ENCODE measurements at regions of chr2 and their contacts with region 1.

Region 1: GRCh38 chr2:190843874-190844699 is 36.5 kb upstream of the GLS start:
- DNase-seq: peak; percentile 17
- H3K4me3 Mint-ChIP-seq: no peak overlapping the region
- H3K27ac Mint-ChIP-seq: peak overlapping the region; percentile 94
- H3K4me1 Mint-ChIP-seq: peaks cover 44% of the 10 kb centered on the region
- H3K27me3 Mint-ChIP-seq: no peaks in the 10 kb centered on the region

Region 2: DNA sequence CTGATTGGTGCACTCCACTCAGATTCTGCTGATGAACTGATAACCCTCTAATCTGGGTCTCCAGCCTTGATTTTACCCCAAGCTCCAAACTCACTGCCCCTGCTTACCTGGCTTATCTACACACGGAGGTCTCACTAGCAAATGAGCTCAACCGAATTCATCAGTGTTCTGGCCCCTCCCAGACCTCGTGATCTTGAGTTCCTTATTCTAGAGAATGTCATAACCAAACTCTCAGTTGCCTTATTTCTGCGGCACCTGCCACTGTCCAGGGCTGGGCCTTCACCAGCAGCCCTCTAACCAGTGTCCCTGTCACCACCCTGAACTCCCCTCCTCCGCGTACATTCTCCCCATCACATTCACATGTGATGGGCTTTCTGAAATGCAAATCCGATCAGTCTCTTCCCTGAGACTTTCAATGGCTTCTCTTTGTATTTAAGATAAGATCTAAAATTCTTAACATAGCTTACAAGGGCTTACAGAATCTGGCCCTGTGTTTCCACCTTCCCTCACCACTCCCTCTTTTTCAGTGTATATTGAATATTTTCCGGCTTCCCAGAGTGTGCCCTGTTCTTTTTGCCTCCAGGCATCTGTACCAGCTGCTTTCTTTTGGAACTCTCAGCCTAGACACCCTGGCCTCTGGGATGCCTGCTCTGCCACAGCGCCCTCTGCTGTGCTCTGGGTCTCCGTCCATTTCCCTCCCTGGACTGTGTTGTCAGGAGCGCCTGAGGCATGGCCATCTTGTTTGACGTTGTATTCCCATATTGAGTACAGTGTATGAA is 164.1 kb before region 1 on chr2:
- intact Hi-C with region 1: loop called (anchors 1 kb)
- DNase-seq: peak; percentile 29
- H3K4me3 Mint-ChIP-seq: peak overlapping the region; percentile 51
- H3K27ac Mint-ChIP-seq: peak overlapping the region; percentile 92
- H3K4me1 Mint-ChIP-seq: peaks cover 45% of the 10 kb centered on the region
- H3K27me3 Mint-ChIP-seq: no peaks in the 10 kb centered on the region

Region 3: DNA sequence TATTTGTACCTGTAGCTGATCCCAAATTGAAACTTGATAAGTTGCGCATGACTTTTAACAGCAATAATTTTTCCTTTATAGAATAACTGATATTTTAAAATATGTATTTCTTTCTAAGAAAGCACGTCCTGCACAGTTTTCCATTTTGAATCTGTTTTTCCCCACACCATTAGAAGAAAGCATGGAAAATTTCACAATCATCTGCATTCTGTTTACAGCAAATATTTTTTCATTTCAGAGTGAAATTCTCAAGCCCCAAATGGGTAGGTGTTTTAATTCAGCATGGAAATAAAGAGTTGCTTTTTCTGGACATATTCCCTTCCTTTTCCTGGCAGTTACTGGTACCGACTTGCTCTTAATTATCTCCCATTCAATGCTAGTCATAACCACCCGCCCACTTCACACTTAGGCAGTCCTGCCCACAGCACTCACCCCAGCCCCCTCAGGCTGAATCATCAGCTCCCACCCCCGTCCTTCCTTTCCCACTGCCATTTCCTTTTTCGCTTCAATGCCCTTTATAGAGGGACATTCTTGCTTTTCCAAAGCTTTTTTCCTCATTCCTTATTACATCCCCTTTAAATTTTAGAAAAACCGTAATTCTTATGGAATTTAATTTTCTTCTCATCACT is 52.6 kb before region 1 on chr2:
- intact Hi-C with region 1: loop called (anchors 2 kb)
- DNase-seq: no peak
- H3K4me3 Mint-ChIP-seq: peak overlapping the region; percentile 15
- H3K27ac Mint-ChIP-seq: peak overlapping the region; percentile 75
- H3K4me1 Mint-ChIP-seq: peaks cover 65% of the 10 kb centered on the region
- H3K27me3 Mint-ChIP-seq: no peaks in the 10 kb centered on the region

Region 4: DNA sequence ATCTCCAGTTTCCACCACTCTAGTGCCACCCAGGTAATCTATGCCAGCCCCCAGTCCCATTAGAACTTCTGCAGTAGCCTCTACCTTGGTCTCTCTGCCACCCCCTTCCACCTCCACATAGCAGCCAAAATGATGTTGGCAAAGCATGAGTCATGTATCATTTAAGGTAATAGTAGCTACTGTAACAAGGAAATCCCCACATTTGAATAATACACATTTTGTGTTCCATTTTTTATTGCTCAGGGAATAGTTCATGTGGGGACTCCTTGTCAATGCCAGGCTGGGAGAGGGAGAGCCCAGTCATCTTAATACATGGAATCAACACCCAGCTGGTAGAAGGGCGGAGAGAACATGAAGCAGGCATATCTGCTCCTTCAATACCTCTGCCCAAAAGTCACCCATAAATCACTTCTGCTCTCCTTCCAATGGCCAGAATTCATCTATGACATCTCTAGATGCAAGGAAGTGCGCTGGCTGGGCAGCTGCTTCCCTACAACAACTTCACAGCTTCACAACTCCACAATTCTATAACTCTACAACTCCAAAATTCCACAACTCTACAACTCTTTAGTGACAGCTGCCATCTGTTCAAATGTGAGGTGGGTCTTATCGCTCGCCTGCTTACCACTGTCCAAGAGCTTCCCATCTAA is 34.1 kb before region 1 on chr2:
- intact Hi-C with region 1: loop called (anchors 2 kb)
- DNase-seq: no peak
- H3K4me3 Mint-ChIP-seq: no peak overlapping the region
- H3K27ac Mint-ChIP-seq: no peak overlapping the region
- H3K4me1 Mint-ChIP-seq: peaks cover 26% of the 10 kb centered on the region
- H3K27me3 Mint-ChIP-seq: no peaks in the 10 kb centered on the region

Region 5: GRCh38 chr2:190875891-190876290 is 31.8 kb after region 1 on chr2:
- intact Hi-C with region 1: no loop called
- DNase-seq: no peak
- H3K4me3 Mint-ChIP-seq: no peak overlapping the region
- H3K27ac Mint-ChIP-seq: peak overlapping the region; percentile 45
- H3K4me1 Mint-ChIP-seq: peaks cover 17% of the 10 kb centered on the region
- H3K27me3 Mint-ChIP-seq: peaks cover 2% of the 10 kb centered on the region

Region 6: GRCh38 chr2:190911813-190912212 is 67.7 kb after region 1 on chr2:
- intact Hi-C with region 1: loop called (anchors 2 kb)
- DNase-seq: no peak
- H3K4me3 Mint-ChIP-seq: no peak overlapping the region
- H3K27ac Mint-ChIP-seq: peak overlapping the region; percentile 53
- H3K4me1 Mint-ChIP-seq: peaks cover 42% of the 10 kb centered on the region
- H3K27me3 Mint-ChIP-seq: no peaks in the 10 kb centered on the region

Region 7: DNA sequence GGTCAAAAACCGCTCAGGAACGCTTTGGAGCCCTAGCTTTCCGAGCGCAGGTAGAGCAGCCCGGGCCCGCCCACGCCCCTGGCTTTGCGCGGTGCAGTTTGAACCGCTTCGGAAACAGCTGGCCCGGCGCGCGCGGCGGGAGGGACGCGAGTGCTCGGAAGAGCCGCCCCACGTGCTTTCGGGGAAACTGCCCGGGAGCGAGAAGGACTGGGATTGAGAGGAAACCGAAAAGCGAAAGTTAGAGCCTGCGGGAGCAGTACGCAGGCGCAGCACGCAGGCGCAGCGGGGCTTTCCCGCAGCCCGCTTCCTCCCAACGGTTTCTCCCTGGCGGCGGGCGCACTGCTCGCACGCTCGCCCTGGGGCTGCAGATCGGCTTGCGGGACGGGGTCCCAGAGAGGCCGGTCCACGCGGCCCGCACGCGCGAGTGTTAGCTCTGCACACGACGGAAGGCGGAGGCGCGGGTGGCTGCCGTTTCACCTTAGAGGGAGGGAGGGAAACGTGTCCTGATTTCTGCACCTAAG is 176.2 kb after region 1 on chr2:
- intact Hi-C with region 1: loop called (anchors 5 kb)
- DNase-seq: peak; percentile 96
- H3K4me3 Mint-ChIP-seq: no peak overlapping the region
- H3K27ac Mint-ChIP-seq: no peak overlapping the region
- H3K4me1 Mint-ChIP-seq: peaks cover 35% of the 10 kb centered on the region
- H3K27me3 Mint-ChIP-seq: no peaks in the 10 kb centered on the region

Region 8: DNA sequence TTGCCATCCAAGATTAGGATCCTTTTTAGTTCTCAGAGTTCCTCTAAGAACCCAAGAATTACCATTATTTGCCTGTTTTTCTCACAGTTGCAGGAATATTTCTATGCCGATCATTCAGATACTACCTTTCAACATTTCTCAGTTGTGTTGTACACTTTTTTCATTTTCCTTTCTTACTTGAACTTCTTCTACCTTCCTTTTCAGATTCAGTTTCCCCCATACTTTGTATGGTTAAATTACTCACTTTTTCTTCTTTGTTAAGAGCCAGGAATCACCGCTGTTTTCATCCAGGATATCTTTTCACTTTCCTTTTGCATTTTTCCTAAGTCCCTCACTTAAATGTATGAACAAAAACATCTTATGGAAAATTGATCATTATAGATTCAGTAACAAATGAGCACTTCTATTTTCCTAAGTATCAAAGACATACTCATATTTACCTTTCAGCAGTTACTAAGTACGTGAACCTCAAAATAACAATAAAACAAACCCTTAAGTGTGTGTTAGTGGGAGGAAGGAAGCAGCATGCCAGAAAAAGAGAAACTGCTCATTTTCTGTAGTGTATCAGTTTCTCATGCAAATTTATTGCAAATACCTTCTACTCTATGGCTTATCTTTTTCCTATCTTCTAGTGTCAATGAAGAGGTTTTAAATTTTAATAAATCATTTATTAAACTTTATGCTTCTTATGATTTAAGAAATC is 234.2 kb after region 1 on chr2:
- intact Hi-C with region 1: no loop called
- DNase-seq: no peak
- H3K4me3 Mint-ChIP-seq: peak overlapping the region; percentile 74
- H3K27ac Mint-ChIP-seq: peak overlapping the region; percentile 85
- H3K4me1 Mint-ChIP-seq: peaks cover 42% of the 10 kb centered on the region
- H3K27me3 Mint-ChIP-seq: no peaks in the 10 kb centered on the region

Measured in activated T-helper 2 cell treated with anti-CD3 and anti-CD28 coated beads, Interferon-gamma antibody, Interleukin-2, Interleukin-4, amounts not matched to agents 10 μg/mL and 5 μg/mL and 100 μg/mL, durations not matched to agents 14 hours and 24 hours and 36 hours (primary cell).